ENCODE measurements at regions of chr14 and their contacts with region 1.

Region 1: DNA sequence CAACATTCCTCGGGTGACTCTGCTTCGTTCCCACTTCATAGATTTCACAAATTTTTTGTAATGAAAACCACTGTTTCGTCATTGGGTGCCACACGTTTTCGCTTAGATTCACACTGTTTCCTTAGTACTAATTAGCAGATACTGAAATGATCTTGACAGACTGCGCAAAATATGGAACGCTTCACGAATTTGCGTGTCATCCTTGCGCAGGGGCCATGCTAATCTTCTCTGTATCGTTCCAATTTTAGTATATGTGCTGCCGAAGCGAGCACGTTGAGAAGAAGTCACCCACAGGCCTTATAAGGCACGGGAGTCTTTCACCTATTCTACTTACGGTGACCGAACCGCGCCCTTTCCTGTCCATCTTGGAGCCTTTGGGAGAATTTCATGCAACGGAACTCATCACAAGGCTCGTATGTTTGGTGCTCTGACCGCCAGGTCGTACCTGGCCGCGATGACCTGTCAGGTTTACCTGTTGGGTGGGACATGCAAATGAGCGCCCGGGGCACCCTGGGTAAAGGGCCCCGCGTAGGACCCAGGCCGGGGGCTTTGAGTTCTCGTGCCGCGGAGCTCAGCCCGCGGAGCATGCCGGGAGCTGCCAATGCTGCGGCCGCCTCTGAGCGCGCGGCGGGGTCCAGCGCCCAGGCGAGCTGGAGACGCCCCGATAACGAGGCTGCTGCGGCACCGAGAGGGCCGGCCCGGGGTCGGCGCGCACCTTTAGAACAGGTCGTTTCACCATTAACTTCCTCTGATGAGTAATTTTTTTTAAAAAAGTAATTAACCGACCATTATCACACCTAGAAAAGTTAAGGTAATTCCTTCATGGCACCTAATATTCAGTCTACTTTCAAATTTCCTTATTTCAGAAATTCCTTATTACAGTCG is at the start of gene RNU6-8:
- DNase-seq: peak; percentile 96
- H3K4me3 ChIP-seq: peak within 1 kb of the TSS; percentile 82 to 96
- H3K27ac ChIP-seq: peak within 1 kb of the TSS; percentile 89 to 97
- H3K4me1 ChIP-seq: no peaks in the 10 kb centered on the region
- H3K27me3 ChIP-seq: no peaks in the 10 kb centered on the region
- CTCF ChIP-seq: no peak
- POLR2A ChIP-seq: no peak
- total RNA-seq, gene RNU6-8: not detected

Region 2: GRCh38 chr14:31802838-31803237 is 400.4 kb before region 1 on chr14:
- intact Hi-C with region 1: no loop called
- DNase-seq: no peak
- H3K4me3 ChIP-seq: no peak overlapping the region
- H3K27ac ChIP-seq: no peak overlapping the region
- H3K4me1 ChIP-seq: no peaks in the 10 kb centered on the region
- H3K27me3 ChIP-seq: no peaks in the 10 kb centered on the region
- CTCF ChIP-seq: no peak
- POLR2A ChIP-seq: no peak

Region 3: GRCh38 chr14:31902002-31902401 is 301.2 kb before region 1 on chr14:
- intact Hi-C with region 1: no loop called
- DNase-seq: no peak
- H3K4me3 ChIP-seq: no peak overlapping the region
- H3K27ac ChIP-seq: no peak overlapping the region
- H3K4me1 ChIP-seq: no peaks in the 10 kb centered on the region
- H3K27me3 ChIP-seq: no peaks in the 10 kb centered on the region
- CTCF ChIP-seq: no peak
- POLR2A ChIP-seq: no peak

Region 4: GRCh38 chr14:32076278-32077080 is 126.8 kb before region 1 on chr14:
- intact Hi-C with region 1: loop called (anchors 2 kb)
- DNase-seq: peak; percentile 96
- H3K4me3 ChIP-seq: peak overlapping the region; percentile 96 to 97
- H3K27ac ChIP-seq: peak overlapping the region; percentile 99
- H3K4me1 ChIP-seq: peaks cover 9% of the 10 kb centered on the region
- H3K27me3 ChIP-seq: no peaks in the 10 kb centered on the region
- CTCF ChIP-seq: no peak
- POLR2A ChIP-seq: no peak